HEK293T (cell line): ENCODE measurements at regions of chr17 and their contacts with region 1.

Region 1: DNA sequence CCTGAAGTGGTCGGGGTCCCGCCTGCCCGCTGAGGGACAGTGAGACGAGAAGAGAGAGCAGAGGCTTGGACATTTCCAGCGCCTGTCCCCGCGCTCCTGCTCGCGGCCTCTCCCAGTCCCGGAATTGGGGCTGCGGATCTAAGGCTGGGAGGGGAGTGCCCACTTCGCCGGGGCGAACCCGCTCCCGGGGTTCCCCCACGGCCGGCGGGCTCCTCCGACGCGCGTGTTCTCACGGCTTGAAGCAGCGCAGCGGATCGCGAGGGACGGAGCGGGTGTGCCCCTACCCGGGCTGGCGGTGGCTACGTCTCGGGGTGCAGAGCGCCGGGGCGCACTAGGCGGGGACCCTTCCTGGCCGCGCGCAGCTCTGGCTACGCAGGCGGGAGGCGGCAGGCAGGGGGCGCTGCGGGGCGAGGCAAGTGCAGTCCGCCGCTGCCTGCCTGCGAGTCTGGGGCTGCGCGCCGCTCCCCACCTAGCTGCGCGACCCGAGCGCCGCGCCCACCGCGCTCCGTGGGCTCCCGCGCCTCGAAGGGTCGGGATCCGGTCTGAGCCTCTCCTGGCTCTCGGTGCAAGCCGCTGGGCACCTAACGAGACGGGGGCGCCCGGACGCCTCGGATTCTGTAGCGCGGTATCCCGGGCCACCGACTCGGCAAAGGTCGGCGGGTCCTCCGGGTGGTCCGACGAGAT is 1.2 kb downstream of the NGFR start:
- DNase-seq: peak; percentile 87

Region 2: GRCh38 chr17:49443862-49444261 is 52.5 kb before region 1 on chr17:
- CTCF ChIA-PET with region 1: no interaction called
- POLR2A ChIA-PET with region 1: no interaction called
- DNase-seq: no peak

Region 3: GRCh38 chr17:49508061-49508865 is 11.9 kb after region 1 on chr17:
- CTCF ChIA-PET with region 1: interaction called, 17 read pairs
- POLR2A ChIA-PET with region 1: interaction called, 3 read pairs
- DNase-seq: no peak